ENCODE measurements at regions of chr6 and their contacts with region 1.

Region 1: DNA sequence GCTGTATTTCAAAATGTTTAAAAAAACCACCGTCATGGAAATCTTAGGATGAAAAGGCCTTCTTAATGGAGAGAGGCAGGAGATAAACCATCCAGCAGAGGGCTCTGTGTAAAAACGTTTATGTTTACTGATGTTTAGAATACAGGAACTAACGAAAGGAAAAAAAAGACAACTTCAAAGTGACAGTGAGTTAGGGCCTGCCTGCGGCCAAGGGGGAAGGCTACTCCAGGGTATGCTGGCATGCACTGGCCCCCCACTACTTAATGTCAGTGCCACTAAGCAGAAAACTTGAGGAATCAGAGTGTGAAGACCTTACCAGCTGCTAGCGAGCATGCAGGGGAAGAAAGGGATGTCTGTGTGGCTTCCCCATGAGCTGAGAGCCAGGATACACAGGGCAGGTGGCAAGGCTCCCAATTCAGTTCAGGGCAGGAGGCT is 47.7 kb downstream of the AKAP7 start:
- DNase-seq: peak in 1 of 2 donors; percentile 65
- ATAC-seq: peak; percentile 68 to 94 (median 86)
- H3K4me3 ChIP-seq: no peak overlapping the region
- H3K4me3 Mint-ChIP-seq: peak overlapping the region; percentile 87
- H3K27ac ChIP-seq: no peak overlapping the region
- H3K27ac Mint-ChIP-seq: peak overlapping the region; percentile 65 to 89
- H3K4me1 ChIP-seq: peaks cover 8% of the 10 kb centered on the region
- H3K4me1 Mint-ChIP-seq: peaks cover 9 to 11% of the 10 kb centered on the region in 2 donors
- H3K27me3 ChIP-seq: no peaks in the 10 kb centered on the region
- H3K27me3 Mint-ChIP-seq: no peaks in the 10 kb centered on the region
- CTCF ChIP-seq: peak; percentile 53

Region 2: DNA sequence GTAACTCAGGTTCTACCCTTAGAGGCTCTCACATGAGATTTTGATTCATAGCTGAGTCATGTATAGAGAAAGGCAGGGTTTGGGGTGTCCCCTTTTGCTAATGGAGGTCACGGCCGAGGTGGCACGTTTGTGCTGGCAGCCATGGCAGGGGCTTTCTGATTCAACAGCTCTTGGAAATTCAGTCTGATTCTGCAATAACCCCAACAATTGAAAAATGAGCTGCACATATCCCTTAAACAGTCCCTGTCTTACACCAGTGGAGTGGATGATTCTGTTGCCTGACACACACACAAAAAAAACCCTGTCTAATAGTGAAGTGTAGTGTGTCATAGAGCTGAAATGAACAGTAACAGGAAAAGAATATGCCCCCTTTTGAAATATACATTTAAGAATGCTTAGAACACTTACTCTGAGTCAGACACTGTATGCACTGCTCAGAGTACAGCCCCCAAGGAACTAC is 349.6 kb after region 1 on chr6:
- intact Hi-C with region 1: loop called (anchors 1 kb)
- DNase-seq: peak in 1 of 2 donors; percentile 21
- ATAC-seq: no peak
- H3K4me3 ChIP-seq: no peak overlapping the region
- H3K4me3 Mint-ChIP-seq: no peak overlapping the region
- H3K27ac ChIP-seq: no peak overlapping the region
- H3K27ac Mint-ChIP-seq: peak overlapping the region in 1 of 2 donors; percentile 63
- H3K4me1 ChIP-seq: no peaks in the 10 kb centered on the region
- H3K4me1 Mint-ChIP-seq: peaks cover 11 to 13% of the 10 kb centered on the region in 2 donors
- H3K27me3 ChIP-seq: no peaks in the 10 kb centered on the region
- H3K27me3 Mint-ChIP-seq: peaks cover 4 to 7% of the 10 kb centered on the region in 2 donors
- CTCF ChIP-seq: no peak

Measured in natural killer cell (primary cell).